Activated CD4-positive, alpha-beta memory T cell treated with anti-CD3 and anti-CD28 coated beads for 36 hours (primary cell): ENCODE measurements at regions of chr19 and their contacts with region 1.

Region 1: GRCh38 chr19:47514869-47515588 is at the start of gene NAPA:
- DNase-seq: peak; percentile 100
- H3K4me3 Mint-ChIP-seq: peak within 1 kb of the TSS; percentile 98
- H3K27ac Mint-ChIP-seq: peak within 1 kb of the TSS; percentile 95
- H3K4me1 Mint-ChIP-seq: peaks cover 74% of the 10 kb centered on the region
- H3K27me3 Mint-ChIP-seq: no peaks in the 10 kb centered on the region
- total RNA-seq, gene NAPA: 67.3 to 70.4 TPM

Region 2: GRCh38 chr19:47483800-47484690 is 31.0 kb before region 1 on chr19 and contains the start of gene KPTN:
- CTCF ChIA-PET with region 1: interaction called, 25 read pairs
- POLR2A ChIA-PET with region 1: interaction called, 7 read pairs
- intact Hi-C with region 1: loop called (anchors 1 kb)
- DNase-seq: peak; percentile 94
- H3K4me3 Mint-ChIP-seq: peak within 1 kb of the TSS; percentile 95
- H3K27ac Mint-ChIP-seq: peak within 1 kb of the TSS; percentile 94
- H3K4me1 Mint-ChIP-seq: peaks cover 20% of the 10 kb centered on the region
- H3K27me3 Mint-ChIP-seq: no peaks in the 10 kb centered on the region
- total RNA-seq, gene KPTN: 7.0 to 9.2 TPM

Region 3: DNA sequence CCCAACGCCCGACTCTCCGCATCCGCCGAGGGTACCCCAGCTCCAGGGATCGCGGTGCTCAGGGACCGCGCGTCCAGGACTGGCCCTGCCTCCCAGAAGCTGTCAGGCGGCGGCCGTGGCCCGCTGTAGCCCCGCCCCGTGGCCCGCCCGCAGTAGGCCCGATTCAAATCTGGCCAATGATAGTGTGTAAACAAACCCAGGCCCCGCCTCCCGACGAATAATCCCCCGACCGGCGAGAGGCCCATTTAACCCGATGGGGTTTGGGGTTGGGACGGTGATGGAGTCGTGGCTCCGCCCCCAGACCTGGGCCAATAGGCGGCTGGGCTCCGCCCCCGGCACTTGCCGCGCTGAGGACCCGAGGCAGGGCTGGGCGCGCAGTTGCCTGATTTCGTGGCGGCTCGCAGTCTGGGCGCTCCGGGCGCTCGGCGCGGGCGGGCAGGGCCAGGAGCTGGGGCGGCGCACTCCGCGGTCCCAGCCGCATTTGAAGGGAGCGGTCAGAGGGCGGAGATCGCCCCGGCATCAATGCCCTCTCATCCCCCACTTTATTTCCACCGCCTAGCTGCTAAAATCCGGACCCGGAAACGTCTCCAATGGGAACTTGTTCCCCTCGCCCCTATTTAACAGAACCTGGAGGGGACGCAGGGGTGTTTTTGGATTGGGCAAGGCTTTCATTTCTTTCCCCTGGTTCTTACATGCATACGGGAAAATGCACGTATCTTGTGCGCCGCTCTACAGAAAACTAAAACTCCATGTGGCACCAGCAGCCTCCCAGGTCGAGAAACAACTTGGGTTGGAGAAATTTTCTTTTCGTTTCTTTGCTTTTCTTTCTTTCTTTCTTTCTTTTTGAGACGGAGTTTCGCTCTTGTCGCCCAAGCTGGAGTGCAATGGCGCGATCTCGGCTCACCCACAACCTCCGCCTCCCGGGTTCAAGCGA is 85.5 kb after region 1 on chr19:
- CTCF ChIA-PET with region 1: interaction called, 16 read pairs
- POLR2A ChIA-PET with region 1: interaction called, 9 read pairs
- intact Hi-C with region 1: loop called (anchors 1 kb)
- DNase-seq: peak; percentile 100
- H3K4me3 Mint-ChIP-seq: peak overlapping the region; percentile 83
- H3K27ac Mint-ChIP-seq: peak overlapping the region; percentile 86
- H3K4me1 Mint-ChIP-seq: peaks cover 30% of the 10 kb centered on the region
- H3K27me3 Mint-ChIP-seq: no peaks in the 10 kb centered on the region

Region 4: GRCh38 chr19:47680858-47681332 is 165.9 kb after region 1 on chr19:
- CTCF ChIA-PET with region 1: no interaction called
- POLR2A ChIA-PET with region 1: no interaction called
- intact Hi-C with region 1: no loop called
- DNase-seq: no peak
- H3K4me3 Mint-ChIP-seq: no peak overlapping the region
- H3K27ac Mint-ChIP-seq: no peak overlapping the region
- H3K4me1 Mint-ChIP-seq: no peaks in the 10 kb centered on the region
- H3K27me3 Mint-ChIP-seq: no peaks in the 10 kb centered on the region

Region 5: GRCh38 chr19:47697863-47698609 is 183.0 kb after region 1 on chr19:
- CTCF ChIA-PET with region 1: interaction called, 4 read pairs
- POLR2A ChIA-PET with region 1: no interaction called
- intact Hi-C with region 1: loop called (anchors 10 kb)
- DNase-seq: peak; percentile 74
- H3K4me3 Mint-ChIP-seq: no peak overlapping the region
- H3K27ac Mint-ChIP-seq: no peak overlapping the region
- H3K4me1 Mint-ChIP-seq: no peaks in the 10 kb centered on the region
- H3K27me3 Mint-ChIP-seq: no peaks in the 10 kb centered on the region